WTC11 (cell line): ENCODE measurements at regions of chr19 and their contacts with region 1.

Region 1: DNA sequence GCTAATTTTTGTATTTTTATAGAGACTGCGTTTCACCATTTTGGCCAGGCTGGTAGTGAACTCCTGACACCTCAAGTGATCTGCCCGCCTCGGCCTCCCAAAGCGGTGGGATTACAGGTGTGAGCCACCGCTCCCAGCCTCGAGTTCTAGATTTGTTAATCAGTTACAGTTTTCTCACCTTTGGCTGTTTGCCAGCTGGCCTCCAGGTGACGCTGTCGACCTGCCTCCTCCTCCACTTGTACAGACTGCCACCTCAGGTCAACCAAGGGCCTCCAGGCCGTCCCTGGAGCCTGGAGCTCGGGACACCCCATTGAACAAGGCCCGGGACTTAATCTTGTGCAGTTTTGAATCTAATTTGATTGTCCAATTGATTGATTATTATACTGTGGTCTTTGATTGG is 45.5 kb downstream of the IER2 start:
- DNase-seq: peak; percentile 87
- ATAC-seq: peak; percentile 97
- H3K4me3 Mint-ChIP-seq: no peak overlapping the region
- H3K27ac Mint-ChIP-seq: no peak overlapping the region
- H3K4me1 Mint-ChIP-seq: no peaks in the 10 kb centered on the region
- H3K27me3 Mint-ChIP-seq: no peaks in the 10 kb centered on the region
- CTCF ChIP-seq: peak; percentile 71

Region 2: GRCh38 chr19:13162518-13163314 is 33.0 kb before region 1 on chr19:
- CTCF ChIA-PET with region 1: interaction called, 42 read pairs
- POLR2A ChIA-PET with region 1: interaction called, 18 read pairs
- DNase-seq: peak; percentile 96
- ATAC-seq: peak; percentile 55
- H3K4me3 Mint-ChIP-seq: peak overlapping the region; percentile 72
- H3K27ac Mint-ChIP-seq: peak overlapping the region; percentile 99
- H3K4me1 Mint-ChIP-seq: peaks cover 55% of the 10 kb centered on the region
- H3K27me3 Mint-ChIP-seq: no peaks in the 10 kb centered on the region
- CTCF ChIP-seq: no peak

Region 3: DNA sequence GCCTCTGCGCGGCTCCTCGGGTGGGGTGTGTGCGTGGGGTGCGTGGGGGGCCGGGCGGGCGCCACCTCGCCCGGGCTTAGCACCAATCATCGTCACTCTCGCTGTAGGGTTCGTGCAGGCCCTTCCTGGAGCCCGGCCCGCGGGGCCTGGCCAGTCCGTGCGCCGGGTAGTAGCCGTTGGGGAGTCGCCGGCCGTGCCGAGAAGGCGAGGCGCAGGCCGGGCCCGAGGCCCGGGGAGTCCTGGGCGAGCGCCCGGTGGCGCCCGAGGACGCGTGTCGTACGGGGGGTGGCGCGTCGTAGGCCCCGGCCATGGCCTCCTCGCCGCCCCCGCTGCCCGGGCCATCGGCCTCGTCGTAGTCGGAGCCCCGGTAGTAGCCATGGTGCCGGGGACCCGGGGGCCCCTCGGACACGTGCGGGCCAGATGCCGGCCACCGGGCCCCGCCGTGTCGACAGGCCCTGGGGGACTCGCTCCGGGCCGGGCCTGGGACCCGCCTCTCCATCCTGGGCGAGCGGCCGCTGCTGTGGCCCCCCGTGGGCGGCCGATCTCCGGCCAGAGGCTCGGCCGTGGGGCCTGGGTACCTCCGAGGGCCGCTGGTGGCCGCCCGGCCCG is 11.7 kb after region 1 on chr19:
- CTCF ChIA-PET with region 1: interaction called, 43 read pairs
- POLR2A ChIA-PET with region 1: no interaction called
- DNase-seq: no peak
- ATAC-seq: peak; percentile 9; the same call in 1 of the 2 replicates
- H3K4me3 Mint-ChIP-seq: no peak overlapping the region
- H3K27ac Mint-ChIP-seq: no peak overlapping the region
- H3K4me1 Mint-ChIP-seq: 0 out of 2 replicates have a peak, but pooled peaks cover 2% of the 10 kb centered on the region
- H3K27me3 Mint-ChIP-seq: no peaks in the 10 kb centered on the region
- CTCF ChIP-seq: no peak

Region 4: DNA sequence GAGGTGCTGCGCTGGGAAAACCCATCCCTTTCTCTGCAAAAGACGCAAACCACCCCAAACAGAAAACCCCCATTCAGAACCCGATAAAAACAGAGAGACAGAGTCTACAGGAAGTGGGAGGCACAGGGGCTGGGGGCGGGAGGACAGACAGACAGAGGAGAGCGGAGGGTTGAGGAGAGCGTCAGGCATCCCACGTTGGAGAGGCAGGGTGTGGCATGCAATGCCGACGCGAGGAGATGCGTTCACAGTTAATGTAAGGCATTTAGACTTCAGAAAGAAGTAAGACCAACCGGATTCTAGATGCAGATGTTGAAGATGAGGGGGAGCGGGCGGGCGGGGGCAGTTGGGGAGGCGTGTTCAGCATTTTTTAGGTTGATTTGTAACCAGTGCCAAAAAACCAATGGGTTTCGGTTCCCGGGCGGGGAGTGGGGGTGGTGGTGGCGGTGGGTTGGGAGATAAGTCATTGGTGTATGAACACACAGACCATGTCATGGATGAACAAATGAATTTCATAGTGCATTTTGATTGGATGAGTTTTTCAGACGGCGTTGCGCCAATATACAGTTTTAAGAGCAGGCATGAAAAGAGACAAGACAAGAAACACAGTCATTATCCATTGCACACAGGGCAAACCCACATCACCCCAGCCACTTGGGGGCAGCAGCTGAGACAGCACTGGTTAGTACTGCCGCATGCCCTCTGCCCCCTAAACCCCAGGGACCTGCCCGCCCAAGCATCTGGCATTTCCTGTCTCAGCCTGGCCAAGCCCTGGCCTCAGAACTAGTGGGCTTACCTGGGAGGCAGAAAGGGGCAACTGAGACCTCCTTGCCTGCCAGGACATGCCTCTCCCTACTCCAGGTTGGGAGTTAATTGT is 45.8 kb after region 1 on chr19:
- CTCF ChIA-PET with region 1: interaction called, 19 read pairs
- POLR2A ChIA-PET with region 1: interaction called, 4 read pairs
- DNase-seq: peak; percentile 61
- ATAC-seq: peak; percentile 82
- H3K4me3 Mint-ChIP-seq: no peak overlapping the region
- H3K27ac Mint-ChIP-seq: no peak overlapping the region; the same call in 1 of the 2 replicates
- H3K4me1 Mint-ChIP-seq: peaks cover 29% of the 10 kb centered on the region
- H3K27me3 Mint-ChIP-seq: peaks cover 5% of the 10 kb centered on the region; the same call in 1 of the 2 replicates
- CTCF ChIP-seq: no peak

Region 5: DNA sequence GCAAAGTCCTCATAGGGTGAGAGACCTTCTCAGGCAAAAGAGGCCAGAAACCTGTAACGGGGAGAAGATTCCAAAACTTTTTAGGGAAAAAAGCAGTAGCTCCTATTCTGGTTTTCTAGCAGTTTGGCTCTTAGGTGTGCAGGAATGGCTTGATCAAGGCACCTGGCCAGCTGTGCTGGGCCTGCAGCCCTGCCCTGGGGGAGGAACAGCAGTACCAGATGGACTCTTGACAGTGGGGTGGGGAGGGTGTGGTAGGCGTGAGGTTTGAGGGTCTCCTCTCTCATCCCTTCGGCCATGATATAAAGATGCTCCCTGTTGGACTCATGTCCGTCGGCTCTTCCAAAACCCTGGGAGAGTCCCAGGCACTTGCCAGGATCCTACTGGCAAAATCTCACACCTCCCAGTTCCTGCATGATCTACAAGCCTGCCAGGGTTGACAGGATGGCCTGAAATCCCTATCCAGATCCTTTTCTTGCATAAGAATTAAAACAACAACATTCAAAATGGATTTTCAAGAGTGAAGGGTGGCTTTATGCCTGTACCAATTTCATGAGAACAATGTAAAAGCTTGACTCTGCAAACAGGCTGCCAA is 74.9 kb after region 1 on chr19:
- CTCF ChIA-PET with region 1: interaction called, 68 read pairs
- POLR2A ChIA-PET with region 1: no interaction called
- DNase-seq: no peak
- ATAC-seq: no peak
- H3K4me3 Mint-ChIP-seq: no peak overlapping the region
- H3K27ac Mint-ChIP-seq: no peak overlapping the region
- H3K4me1 Mint-ChIP-seq: no peaks in the 10 kb centered on the region
- H3K27me3 Mint-ChIP-seq: no peaks in the 10 kb centered on the region
- CTCF ChIP-seq: no peak

Region 6: GRCh38 chr19:13588957-13589833 is 393.5 kb after region 1 on chr19:
- CTCF ChIA-PET with region 1: interaction called, 23 read pairs
- POLR2A ChIA-PET with region 1: no interaction called
- DNase-seq: peak; percentile 90
- ATAC-seq: peak; percentile 97
- H3K4me3 Mint-ChIP-seq: no peak overlapping the region
- H3K27ac Mint-ChIP-seq: no peak overlapping the region
- H3K4me1 Mint-ChIP-seq: no peaks in the 10 kb centered on the region
- H3K27me3 Mint-ChIP-seq: peaks cover 2% of the 10 kb centered on the region
- CTCF ChIP-seq: peak; percentile 95